Activated T-helper 2 cell treated with anti-CD3 and anti-CD28 coated beads, Interferon-gamma antibody, Interleukin-2, Interleukin-4, amounts not matched to agents 10 μg/mL and 5 μg/mL and 100 μg/mL, durations not matched to agents 14 hours and 24 hours and 36 hours (primary cell): ENCODE measurements at regions of chr2 and their contacts with region 1.

Region 1: GRCh38 chr2:112692496-112692911 is 28.3 kb upstream of the NT5DC4 start:
- DNase-seq: peak; percentile 70
- H3K4me3 Mint-ChIP-seq: peak overlapping the region; percentile 7
- H3K27ac Mint-ChIP-seq: peak overlapping the region; percentile 77
- H3K4me1 Mint-ChIP-seq: peaks cover 31% of the 10 kb centered on the region
- H3K27me3 Mint-ChIP-seq: no peaks in the 10 kb centered on the region

Region 2: GRCh38 chr2:112634153-112634873 is 58.2 kb before region 1 on chr2:
- intact Hi-C with region 1: no loop called
- DNase-seq: no peak
- H3K4me3 Mint-ChIP-seq: no peak overlapping the region
- H3K27ac Mint-ChIP-seq: no peak overlapping the region
- H3K4me1 Mint-ChIP-seq: peaks cover 64% of the 10 kb centered on the region
- H3K27me3 Mint-ChIP-seq: no peaks in the 10 kb centered on the region

Region 3: DNA sequence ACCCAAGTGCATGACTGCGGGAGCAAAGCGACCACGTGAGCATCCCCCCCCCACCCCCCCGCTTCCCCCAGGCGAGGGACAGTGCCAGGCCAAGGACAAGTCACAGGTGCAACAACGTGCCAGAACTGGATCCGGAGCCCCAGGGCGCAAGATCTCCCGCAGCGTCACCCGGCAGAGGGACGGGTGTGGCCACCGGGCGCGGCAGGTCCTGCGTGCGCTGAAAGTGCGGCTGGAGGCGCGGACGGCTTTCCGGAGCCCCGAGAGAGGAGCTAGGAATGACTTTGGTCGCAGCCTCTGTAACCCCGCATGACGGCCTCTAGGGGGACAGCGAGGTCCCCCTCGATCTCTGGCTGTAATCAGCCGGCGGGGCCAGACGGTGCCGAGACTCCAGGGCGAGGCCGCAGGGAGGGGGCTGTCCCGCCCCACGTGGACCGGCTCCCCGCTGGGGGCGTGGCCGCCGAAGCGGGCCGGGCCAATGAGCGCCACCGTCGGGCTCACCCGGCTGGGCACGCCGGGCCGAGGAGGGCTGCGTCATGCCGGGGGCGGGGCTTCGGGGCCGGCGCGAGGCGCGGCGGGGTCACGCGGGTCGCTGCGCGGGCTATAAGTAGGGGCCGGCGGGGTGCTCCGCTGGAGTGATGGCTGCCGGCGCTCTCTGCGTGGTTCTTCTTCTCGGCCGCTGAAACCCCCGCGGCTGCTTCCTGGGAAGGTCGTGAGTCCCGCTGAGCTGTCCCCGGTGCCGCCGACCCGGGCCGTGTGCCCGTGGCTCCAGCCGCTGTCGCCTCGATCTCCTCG is 47.0 kb before region 1 on chr2 and contains the start of gene SLC20A1:
- intact Hi-C with region 1: loop called (anchors 2 kb)
- DNase-seq: peak; percentile 98
- H3K4me3 Mint-ChIP-seq: peak within 1 kb of the TSS; percentile 97
- H3K27ac Mint-ChIP-seq: peak within 1 kb of the TSS; percentile 77
- H3K4me1 Mint-ChIP-seq: peaks cover 68% of the 10 kb centered on the region
- H3K27me3 Mint-ChIP-seq: no peaks in the 10 kb centered on the region
- total RNA-seq, gene SLC20A1: 128 TPM in 2 replicates

Region 4: GRCh38 chr2:112706170-112706664 is 13.7 kb after region 1 on chr2:
- intact Hi-C with region 1: loop called (anchors 1 kb)
- DNase-seq: peak; percentile 84
- H3K4me3 Mint-ChIP-seq: peak overlapping the region; percentile 70
- H3K27ac Mint-ChIP-seq: peak overlapping the region; percentile 76
- H3K4me1 Mint-ChIP-seq: peaks cover 57% of the 10 kb centered on the region
- H3K27me3 Mint-ChIP-seq: peaks cover 1% of the 10 kb centered on the region

Region 5: DNA sequence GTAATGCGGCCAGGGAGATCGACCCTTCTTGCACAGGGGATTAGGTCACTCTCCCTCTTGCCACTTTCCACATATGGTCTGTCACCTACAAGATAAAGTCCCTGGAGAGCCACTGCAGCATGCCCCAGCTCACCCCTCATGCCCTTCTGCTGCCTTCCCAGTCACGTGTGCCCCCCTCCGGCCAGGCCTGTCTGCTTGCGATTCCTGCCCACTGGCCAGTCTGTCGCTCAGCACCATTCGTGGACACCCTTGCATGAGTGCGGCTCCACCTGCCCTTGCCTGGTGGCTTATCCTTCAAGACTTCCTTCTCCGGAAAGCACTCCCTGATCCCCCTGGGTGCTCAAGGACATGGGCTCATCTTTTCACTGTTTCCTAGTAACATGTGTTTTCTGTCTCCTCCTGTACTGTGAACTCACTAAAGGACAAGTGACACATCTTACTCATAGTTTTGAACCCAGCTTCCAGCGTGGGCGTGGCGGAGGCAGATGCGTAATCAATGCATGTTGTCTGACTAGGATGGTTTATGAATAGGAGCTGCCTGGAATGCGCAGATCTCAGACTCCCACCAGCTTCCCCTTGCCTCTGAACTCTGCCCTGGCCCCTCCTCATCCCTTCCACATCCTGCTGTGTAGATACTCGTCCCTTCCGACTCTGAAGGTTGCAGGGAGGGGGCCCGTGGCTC is 20.5 kb after region 1 on chr2:
- intact Hi-C with region 1: loop called (anchors 1 kb)
- DNase-seq: no peak
- H3K4me3 Mint-ChIP-seq: no peak overlapping the region
- H3K27ac Mint-ChIP-seq: peak overlapping the region; percentile 61
- H3K4me1 Mint-ChIP-seq: peaks cover 42% of the 10 kb centered on the region
- H3K27me3 Mint-ChIP-seq: peaks cover 1% of the 10 kb centered on the region

Region 6: DNA sequence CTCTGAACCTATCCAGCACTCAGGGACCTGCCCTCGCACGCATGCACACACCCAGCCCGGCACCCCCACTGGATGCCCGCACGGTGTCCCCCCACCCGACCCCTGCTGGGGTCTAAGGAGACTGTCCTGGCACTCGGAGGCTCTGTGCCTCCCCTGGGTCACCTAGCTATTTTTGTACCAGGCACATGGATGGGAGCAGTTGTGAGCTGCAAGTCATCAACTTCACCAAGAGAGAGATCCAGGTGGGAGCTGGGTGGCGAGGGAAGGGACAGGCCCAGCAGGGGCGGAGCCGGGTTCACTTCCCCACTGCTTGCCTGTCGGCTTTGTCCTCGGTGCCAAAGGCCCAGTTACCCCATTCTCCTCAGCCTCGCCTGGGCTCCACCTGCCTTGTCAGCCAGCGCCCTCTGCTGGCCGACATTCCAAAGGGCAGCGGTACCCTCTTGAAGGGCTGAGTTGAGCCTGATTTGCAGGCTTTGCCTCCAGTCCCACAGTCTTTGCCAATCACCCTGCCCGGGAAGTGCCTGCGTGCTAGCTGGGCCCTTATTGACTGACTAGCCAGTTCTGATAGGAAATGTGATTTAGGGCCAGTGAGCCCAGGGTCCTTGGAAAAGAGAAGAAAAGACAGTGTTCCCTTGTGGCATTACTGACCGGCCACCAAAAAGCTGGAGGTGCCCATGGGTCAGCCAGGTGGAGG is 34.1 kb after region 1 on chr2:
- intact Hi-C with region 1: loop called (anchors 2 kb)
- DNase-seq: peak; percentile 83
- H3K4me3 Mint-ChIP-seq: no peak overlapping the region
- H3K27ac Mint-ChIP-seq: no peak overlapping the region
- H3K4me1 Mint-ChIP-seq: peaks cover 32% of the 10 kb centered on the region
- H3K27me3 Mint-ChIP-seq: peaks cover 2% of the 10 kb centered on the region